Dendritic cell treated with granulocyte-macrophage colony-stimulating factor and Interleukin-4, amounts not matched to agents 40 ng/mL and 50 ng/mL, for 4 days (primary cell): ENCODE measurements at regions of chr18 and their contacts with region 1.

Region 1: GRCh38 chr18:864872-865273 is 39.8 kb upstream of the ADCYAP1 start:
- H3K4me3 Mint-ChIP-seq: no peak overlapping the region
- H3K27ac Mint-ChIP-seq: no peak overlapping the region
- H3K4me1 Mint-ChIP-seq: no peaks in the 10 kb centered on the region
- H3K27me3 Mint-ChIP-seq: peaks cover 33% of the 10 kb centered on the region

Region 2: DNA sequence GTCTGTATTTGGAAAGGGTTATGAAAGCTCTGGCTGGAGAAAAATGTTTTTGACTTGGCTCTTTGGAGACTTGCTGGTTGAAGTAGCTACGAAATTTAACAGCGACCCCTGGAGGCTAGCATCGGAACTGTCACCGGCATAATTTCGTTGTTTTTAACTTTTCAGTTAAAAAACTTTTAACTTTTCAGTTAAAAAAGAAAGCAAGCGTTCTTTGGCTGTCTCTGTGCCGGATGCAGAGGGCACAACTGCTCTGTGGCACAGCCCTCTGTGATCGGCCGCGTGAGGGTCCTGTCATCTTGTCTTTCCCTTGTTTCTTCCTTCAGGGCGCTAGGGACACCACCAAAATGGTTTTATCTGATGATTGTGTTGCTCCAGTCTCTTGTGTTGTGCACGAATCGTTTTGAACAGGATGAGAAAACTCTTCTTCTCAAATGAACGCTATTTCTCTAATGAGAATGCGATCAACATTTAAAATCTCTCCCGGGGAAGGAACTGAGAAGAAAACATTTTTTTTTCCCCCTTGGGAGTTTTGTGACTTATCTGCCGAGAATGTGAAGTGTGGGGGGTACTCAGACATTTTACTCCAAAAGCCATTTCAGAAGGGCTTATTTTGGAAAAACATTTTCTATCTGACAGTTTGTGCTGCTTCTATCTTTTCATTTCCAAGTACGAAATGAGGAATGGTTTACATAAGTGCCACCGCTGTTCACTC is 96.9 kb after region 1 on chr18:
- intact Hi-C with region 1: loop called (anchors 1 kb)
- H3K4me3 Mint-ChIP-seq: no peak overlapping the region
- H3K27ac Mint-ChIP-seq: no peak overlapping the region
- H3K4me1 Mint-ChIP-seq: no peaks in the 10 kb centered on the region
- H3K27me3 Mint-ChIP-seq: peaks cover 4% of the 10 kb centered on the region

Region 3: GRCh38 chr18:1663879-1664705 is 799.2 kb after region 1 on chr18:
- intact Hi-C with region 1: loop called (anchors 5 kb)
- H3K4me3 Mint-ChIP-seq: no peak overlapping the region
- H3K27ac Mint-ChIP-seq: no peak overlapping the region
- H3K4me1 Mint-ChIP-seq: no peaks in the 10 kb centered on the region
- H3K27me3 Mint-ChIP-seq: no peaks in the 10 kb centered on the region

Region 4: DNA sequence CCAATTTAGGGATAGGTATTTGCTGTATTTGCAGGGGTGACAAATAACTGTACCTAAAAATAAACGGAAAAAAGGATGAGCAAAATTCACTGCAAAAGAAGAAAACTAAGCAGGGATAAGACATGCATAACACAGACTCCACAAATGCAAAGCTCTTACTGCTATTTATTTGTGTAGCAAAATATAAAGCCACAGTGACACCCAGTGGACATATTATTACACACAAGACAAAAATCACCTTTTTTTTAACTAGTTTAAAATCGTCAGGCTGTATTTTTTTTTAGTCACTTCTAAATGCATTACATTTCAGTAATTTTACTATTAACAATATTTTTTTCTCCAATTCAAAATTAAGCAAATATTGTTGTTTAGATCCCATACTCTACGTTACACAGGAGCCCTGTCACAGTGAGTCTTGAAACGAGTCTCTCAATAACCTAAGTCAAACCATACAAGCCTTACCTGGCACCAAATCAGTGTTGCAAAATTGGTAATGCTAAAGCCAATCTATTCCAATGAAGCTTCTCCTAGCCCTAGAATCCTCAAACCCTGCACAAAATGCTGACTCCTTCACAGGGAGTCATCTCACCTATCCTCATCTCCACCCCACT is 1682.7 kb after region 1 on chr18:
- intact Hi-C with region 1: loop called (anchors 10 kb)
- H3K4me3 Mint-ChIP-seq: no peak overlapping the region
- H3K27ac Mint-ChIP-seq: no peak overlapping the region
- H3K4me1 Mint-ChIP-seq: no peaks in the 10 kb centered on the region
- H3K27me3 Mint-ChIP-seq: no peaks in the 10 kb centered on the region